ENCODE measurements at regions of chr14 and their contacts with region 1.

Region 1: GRCh38 chr14:90301668-90302090 is 30.1 kb downstream of the NRDE2 start:
- DNase-seq: no peak

Region 2: GRCh38 chr14:90495357-90496276 is 193.9 kb after region 1 on chr14:
- intact Hi-C with region 1: loop called (anchors 10 kb)
- DNase-seq: no peak

Region 3: DNA sequence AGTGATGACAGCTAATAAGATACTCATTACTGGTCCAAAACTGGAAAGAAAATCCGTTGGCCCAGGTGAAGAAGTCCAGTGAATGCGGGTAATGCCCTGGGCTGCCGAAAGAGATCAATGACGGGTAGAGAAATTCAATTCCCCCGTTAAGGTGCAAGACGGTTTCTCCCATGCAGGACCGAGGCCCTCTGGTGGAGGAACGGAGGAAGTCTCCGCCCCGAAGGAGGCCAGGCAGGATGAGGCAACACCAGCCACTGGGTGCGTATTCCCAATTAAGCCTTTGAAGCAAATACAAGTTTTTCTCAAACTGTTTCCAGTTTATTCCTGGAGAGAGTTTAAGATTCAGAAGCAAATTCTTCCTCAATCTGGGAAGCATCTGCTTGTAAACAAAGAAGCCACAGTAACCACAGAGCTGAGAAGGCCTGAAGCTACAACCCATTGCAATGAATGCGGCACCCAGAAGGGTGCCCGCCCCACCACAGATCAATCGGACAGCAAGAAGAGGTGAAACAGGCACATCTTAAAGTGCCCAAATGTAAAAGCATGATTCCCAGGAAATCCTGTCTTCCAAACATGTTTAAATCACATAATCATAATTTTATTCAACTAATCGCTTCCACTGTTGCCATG is 396.0 kb after region 1 on chr14:
- intact Hi-C with region 1: loop called (anchors 2 kb)
- DNase-seq: peak; percentile 93